ENCODE measurements at regions of chr5 and their contacts with region 1.

Region 1: DNA sequence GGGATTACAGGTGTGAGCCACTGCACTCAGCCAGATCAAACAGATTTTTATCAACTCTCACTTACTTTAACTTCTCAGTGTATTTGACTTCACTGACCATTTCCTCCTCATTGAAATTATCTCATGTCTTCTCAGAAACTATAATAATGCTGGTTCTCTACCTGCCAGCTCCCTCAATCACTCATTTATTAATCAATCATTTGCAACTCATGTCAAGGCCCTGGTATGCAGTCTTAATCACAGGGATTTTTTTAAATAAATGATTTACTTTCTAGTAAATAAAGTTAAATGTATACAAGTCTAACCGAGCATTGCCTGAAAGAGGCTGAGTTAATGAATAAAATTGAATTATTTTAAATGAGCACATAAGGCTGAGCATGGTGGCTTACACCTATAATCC is 63.3 kb downstream of the PLPP1 start:
- DNase-seq: peak; percentile 12
- H3K4me3 Mint-ChIP-seq: peak overlapping the region; percentile 5
- H3K27ac Mint-ChIP-seq: peak overlapping the region; percentile 67
- H3K4me1 Mint-ChIP-seq: peaks cover 31% of the 10 kb centered on the region
- H3K27me3 Mint-ChIP-seq: no peaks in the 10 kb centered on the region
- CTCF ChIP-seq: no peak

Region 2: DNA sequence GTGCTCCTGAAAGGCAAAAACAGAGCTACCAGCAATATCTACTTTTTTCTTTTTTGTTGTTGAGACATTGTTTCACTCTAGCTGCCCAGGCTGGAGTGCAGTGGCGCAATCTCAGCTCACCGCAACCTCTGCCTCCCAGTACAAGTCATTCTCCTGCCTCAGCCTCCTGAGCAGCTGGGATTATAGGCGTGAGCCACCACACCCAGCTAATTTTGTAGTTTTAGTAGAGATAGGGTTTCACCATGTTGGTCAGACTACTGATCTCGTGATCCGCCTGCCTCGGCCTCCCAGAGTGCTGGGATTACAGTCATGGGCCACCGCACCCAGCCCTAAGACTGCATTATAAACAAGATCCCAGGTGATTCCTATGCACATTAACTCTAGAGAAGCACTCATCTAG is 46.3 kb after region 1 on chr5:
- CTCF ChIA-PET with region 1: interaction called, 4 read pairs
- intact Hi-C with region 1: loop called (anchors 5 kb)
- DNase-seq: peak; percentile 47
- H3K4me3 Mint-ChIP-seq: peak overlapping the region; percentile 59
- H3K27ac Mint-ChIP-seq: peak overlapping the region; percentile 89
- H3K4me1 Mint-ChIP-seq: peaks cover 52% of the 10 kb centered on the region
- H3K27me3 Mint-ChIP-seq: no peaks in the 10 kb centered on the region
- CTCF ChIP-seq: no peak

Measured in Calu3 (cell line).